Dorsolateral prefrontal cortex (tissue), 120 donors: ENCODE measurements at regions of chr15 and their contacts with region 1.

Region 1: GRCh38 chr15:64731012-64731806 is 44.2 kb downstream of the RBPMS2 start:
- DNase-seq: peak; percentile 74 to 89 (median 84)
- H3K4me3 ChIP-seq: peak overlapping the region in 1 of 59 donors; percentile 34
- H3K27ac ChIP-seq: no peak overlapping the region
- H3K27me3 ChIP-seq: no peaks in the 10 kb centered on the region
- CTCF ChIP-seq: peak; percentile 49 to 97 (median 91)

Region 2: GRCh38 chr15:64105113-64105704 is 626.0 kb before region 1 on chr15:
- intact Hi-C with region 1: no loop called
- DNase-seq: no peak
- H3K4me3 ChIP-seq: no peak overlapping the region
- H3K27ac ChIP-seq: peak overlapping the region in 48 of 59 donors; percentile 1 to 81 (median 52)
- H3K27me3 ChIP-seq: no peaks in the 10 kb centered on the region
- CTCF ChIP-seq: no peak

Region 3: GRCh38 chr15:64651573-64652260 is 79.5 kb before region 1 on chr15:
- intact Hi-C with region 1: no loop called
- DNase-seq: no peak
- H3K4me3 ChIP-seq: no peak overlapping the region
- H3K27ac ChIP-seq: no peak overlapping the region
- H3K27me3 ChIP-seq: no peaks in the 10 kb centered on the region
- CTCF ChIP-seq: no peak

Region 4: DNA sequence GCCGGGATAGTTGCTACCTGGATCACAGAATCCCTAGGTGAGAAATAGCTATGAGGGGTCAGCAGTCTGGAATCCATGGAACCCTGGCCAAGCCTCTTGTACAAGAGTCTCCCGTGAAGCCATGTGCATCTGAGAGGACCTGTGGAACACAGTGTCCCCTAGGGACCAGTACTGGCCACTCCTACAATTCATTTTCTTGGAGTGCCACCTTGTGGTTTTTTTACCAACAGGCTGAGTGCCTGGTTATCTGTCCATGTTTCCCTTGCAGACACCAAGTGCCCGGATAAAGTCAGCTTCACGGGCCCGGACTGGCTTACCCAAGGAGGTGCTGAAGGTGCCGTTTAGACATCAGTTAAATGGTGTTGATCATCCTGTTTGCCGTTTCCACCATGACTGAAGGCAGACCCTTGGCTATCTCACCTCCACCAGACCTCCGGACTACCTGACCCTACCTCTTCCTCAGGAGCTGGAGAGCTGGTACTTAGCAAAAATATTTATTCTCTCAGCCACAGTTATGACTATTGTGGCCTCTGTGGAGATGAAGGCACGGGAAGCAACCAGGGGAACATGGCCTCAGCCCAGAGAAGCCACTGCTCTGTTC is 49.7 kb before region 1 on chr15:
- intact Hi-C with region 1: loop called in 1 of 2 experiments (anchors 1 kb)
- DNase-seq: peak in 6 of 10 donors; percentile 26 to 63 (median 49)
- H3K4me3 ChIP-seq: no peak overlapping the region
- H3K27ac ChIP-seq: peak overlapping the region in 24 of 59 donors; percentile 5 to 61 (median 34)
- H3K27me3 ChIP-seq: no peaks in the 10 kb centered on the region
- CTCF ChIP-seq: peak; percentile 65 to 93 (median 86)

Region 5: DNA sequence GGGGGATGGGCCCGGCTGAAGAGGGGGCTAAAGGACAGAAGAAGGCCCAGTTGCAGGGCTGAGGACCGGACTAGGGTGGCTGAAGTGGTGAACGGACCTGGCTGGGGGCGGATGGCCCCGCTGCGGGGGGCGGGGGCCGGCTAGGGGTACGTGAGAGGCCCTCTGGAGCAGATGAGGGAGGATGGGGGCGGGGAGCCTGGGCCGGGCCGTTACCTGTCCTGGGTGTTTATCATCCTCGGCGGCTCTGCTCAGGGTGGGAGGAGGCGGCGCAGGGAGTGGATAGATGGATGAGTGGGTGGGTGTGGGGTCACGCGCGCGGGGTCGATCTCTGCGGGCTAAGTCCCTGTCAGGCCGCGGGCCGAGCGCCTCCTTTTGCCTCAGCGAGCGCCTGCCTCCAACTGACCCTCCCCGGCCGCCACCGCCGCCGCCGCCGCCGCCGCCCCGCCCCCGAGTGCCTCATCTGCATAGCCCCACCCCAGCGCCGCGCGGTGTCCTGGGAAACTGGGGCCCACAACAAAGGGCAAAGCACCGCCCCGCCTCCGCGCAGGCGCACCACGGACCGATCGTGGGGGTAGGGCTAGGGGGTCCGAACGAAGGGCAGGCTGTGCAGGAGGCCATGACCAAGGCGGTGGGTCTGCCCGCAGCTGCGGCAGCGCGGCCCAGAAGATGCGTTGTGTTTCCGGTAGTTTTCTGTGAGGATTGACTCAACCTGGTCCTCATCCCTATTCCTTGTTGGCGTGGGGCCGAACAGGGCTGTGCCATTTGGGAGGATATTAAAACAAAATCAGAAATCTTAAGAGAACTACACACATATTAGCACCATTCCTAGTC is 28.2 kb before region 1 on chr15:
- intact Hi-C with region 1: no loop called
- DNase-seq: peak; percentile 96 to 99 (median 98)
- H3K4me3 ChIP-seq: peak overlapping the region; percentile 51 to 98 (median 88)
- H3K27ac ChIP-seq: peak overlapping the region; percentile 63 to 99 (median 97)
- H3K27me3 ChIP-seq: no peaks in the 10 kb centered on the region
- CTCF ChIP-seq: peak in 29 of 56 donors; percentile 6 to 50 (median 22)

Region 6: DNA sequence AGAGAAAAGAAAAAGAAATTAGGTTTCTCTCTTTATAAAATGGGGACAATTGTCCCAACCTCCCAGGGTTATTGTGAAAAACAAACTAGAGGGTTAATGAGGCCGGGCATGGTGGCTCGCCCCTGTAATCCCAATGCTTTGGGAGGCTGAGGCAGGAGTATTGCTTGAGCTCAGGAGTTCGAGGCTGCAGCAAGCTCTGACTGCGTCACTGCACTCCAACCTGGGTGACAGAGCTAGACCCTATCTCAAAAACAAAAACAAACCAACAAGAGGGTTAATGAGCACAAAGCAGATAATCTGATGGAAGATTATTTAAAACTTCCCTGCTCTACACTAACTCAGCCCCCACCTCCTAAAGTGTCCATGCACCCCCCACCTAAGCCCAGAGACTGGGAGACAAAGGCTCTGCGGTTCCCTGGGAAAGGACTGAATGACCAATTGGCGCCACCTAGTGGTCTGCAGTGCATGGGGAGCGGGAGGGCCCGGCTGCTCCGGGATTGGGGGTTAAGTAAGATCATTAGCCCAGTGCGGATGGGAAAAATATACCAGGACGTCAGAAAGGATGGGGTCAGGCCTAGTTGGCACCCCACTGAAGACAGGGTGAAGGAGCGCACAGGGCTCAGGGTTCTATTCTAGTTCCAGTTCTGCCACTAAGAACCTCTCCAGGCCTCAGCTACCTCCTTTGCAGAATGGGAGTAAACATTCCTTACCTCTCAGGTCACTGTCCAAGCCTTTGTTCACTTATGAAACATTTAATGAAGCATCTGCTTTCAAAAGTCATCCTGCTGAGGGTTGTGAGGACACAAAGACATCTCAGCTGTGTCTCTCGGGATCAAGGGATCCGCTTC is 78.7 kb after region 1 on chr15:
- intact Hi-C with region 1: loop called (anchors 2 to 5 kb)
- DNase-seq: peak; percentile 58 to 83 (median 74)
- H3K4me3 ChIP-seq: no peak overlapping the region
- H3K27ac ChIP-seq: no peak overlapping the region
- H3K27me3 ChIP-seq: peaks cover 0 to 6% (median 0%) of the 10 kb centered on the region in 45 donors
- CTCF ChIP-seq: peak; percentile 59 to 92 (median 84)

Region 7: DNA sequence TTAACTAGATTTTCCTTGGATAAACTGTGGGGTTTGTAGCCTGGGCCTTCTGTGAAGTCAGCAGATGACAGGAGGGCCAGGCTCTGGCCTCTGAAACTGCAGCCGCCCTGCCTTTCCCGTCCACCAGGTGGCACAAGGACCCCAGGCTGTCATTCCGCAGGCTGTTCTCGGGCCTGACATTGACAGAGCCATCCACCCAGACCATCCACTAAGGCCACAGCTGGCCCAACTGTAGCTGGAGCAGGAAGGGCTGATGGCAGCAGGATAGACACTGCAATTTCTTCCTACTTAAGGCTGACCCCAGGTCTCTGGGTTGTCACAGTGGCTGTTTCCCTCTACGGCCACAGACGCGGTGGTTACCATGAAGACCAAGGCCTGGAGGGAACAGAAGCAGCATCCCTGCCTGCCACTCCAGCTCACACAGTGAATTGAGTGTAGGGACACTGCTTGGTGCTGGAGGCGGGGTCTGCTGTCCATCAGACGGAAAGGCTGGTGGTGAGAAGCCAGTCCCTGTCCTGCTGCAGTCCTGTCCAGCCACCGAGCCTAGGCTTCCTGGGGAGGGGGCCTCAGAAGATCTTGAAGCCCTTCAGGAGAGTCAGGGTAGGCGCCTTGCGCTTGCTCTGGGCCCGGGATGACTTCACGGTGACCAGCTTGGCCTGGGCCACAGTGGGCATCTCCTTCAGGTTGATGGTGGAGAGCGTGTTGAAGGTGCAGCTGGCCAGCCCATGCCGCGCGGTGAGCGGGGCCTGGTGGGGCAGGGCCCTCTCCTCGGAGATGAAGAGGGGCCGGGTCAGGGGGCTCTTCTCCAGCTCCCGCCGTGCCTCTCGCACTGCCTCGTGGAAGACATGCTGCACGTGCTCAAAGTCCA is 323.4 kb after region 1 on chr15:
- intact Hi-C with region 1: loop called in 1 of 2 experiments (anchors 10 kb)
- DNase-seq: peak; percentile 60 to 85 (median 76)
- H3K4me3 ChIP-seq: no peak overlapping the region
- H3K27ac ChIP-seq: peak overlapping the region in 26 of 59 donors; percentile 2 to 68 (median 35)
- H3K27me3 ChIP-seq: peaks cover 0 to under 1% (median 0%) of the 10 kb centered on the region in 45 donors
- CTCF ChIP-seq: peak; percentile 45 to 96 (median 87)

Region 8: GRCh38 chr15:65086017-65086679 is 354.9 kb after region 1 on chr15:
- intact Hi-C with region 1: loop called in 1 of 2 experiments (anchors 10 kb)
- DNase-seq: peak in 1 of 10 donors; percentile 23
- H3K4me3 ChIP-seq: no peak overlapping the region
- H3K27ac ChIP-seq: peak overlapping the region in 11 of 59 donors; percentile 1 to 67 (median 34)
- H3K27me3 ChIP-seq: peaks cover 0 to 9% (median 0%) of the 10 kb centered on the region in 45 donors
- CTCF ChIP-seq: peak in 30 of 56 donors; percentile 7 to 43 (median 24)

Region 9: GRCh38 chr15:65223996-65224395 is 492.8 kb after region 1 on chr15:
- intact Hi-C with region 1: no loop called
- DNase-seq: no peak
- H3K4me3 ChIP-seq: no peak overlapping the region
- H3K27ac ChIP-seq: no peak overlapping the region
- H3K27me3 ChIP-seq: no peaks in the 10 kb centered on the region
- CTCF ChIP-seq: no peak